ENCODE measurements at regions of chr6 and their contacts with region 1.

Region 1: DNA sequence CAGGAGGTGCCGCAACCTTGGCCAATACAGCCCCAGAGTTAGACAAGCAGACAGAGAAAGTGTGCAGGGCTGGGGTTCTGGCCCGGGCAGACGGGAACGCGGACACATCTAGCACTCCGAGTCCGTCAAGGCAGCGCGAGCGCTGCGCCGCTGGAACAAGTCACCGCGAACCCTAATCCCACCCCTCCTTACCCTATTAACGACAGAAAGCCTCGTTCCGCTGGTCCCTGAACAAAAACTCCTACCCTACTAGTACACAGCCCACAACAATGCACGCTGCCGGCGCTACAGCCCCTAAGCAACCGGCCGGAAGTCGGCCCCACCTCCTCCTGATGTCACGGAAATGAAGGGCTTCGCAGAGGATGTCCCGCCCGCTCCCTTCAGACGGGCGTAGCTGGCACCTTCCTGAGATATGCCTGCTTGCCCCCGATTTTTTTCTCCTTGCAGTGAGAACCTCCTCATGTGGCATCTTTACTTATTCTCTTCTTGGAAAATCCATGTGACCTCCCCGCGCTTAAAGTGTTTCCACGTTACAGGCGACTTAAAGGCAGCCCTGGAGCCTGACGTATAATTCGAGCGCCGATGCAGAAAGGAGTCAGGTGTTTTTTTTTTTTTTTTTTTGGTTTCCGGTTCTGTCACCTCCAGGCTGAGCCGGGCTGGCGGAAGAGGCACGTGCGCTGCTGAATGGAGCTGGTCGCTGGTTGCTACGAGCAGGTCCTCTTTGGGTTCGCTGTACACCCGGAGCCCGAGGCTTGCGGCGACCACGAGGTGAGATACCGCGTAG is at the starts of genes C6orf52 and PAK1IP1:
- DNase-seq: peak; percentile 85 to 97 (median 90)
- ATAC-seq: peak; percentile 92
- H3K4me3 ChIP-seq: peak within 1 kb of the TSS; percentile 95
- H3K4me3 Mint-ChIP-seq: peak within 1 kb of the TSS; percentile 92
- H3K27ac ChIP-seq: peak within 1 kb of the TSS; percentile 97 to 99
- H3K27ac Mint-ChIP-seq: peak within 1 kb of the TSS; percentile 100
- H3K4me1 ChIP-seq: peaks cover 25% of the 10 kb centered on the region
- H3K4me1 Mint-ChIP-seq: peaks cover 41% of the 10 kb centered on the region
- H3K27me3 ChIP-seq: no peaks in the 10 kb centered on the region
- H3K27me3 Mint-ChIP-seq: no peaks in the 10 kb centered on the region
- CTCF ChIP-seq: no peak
- total RNA-seq, gene C6orf52: not detected
- total RNA-seq, gene PAK1IP1: 4.1 to 5.8 TPM

Region 2: DNA sequence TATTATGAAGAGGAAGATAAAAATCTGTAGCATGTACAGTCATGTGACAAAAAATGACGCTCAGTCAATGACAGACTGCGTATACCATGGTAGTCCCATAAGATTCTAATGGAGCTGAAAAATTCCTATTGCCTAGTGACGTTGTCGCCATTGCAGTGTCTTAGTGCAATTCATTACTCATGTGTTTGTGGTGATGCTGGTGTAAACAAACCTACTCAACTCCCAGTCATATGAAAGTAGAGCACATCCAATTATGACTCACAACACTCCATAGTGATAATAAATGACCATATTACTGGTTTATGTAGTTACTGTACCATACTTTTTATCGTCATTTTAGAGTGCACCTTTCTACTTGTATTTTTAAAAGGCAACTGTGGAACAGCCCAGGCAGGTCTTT is 324.6 kb before region 1 on chr6:
- CTCF ChIA-PET with region 1: no interaction called
- POLR2A ChIA-PET with region 1: no interaction called
- intact Hi-C with region 1: no loop called
- DNase-seq: no peak
- ATAC-seq: no peak
- H3K4me3 ChIP-seq: no peak overlapping the region
- H3K4me3 Mint-ChIP-seq: no peak overlapping the region
- H3K27ac ChIP-seq: no peak overlapping the region
- H3K27ac Mint-ChIP-seq: no peak overlapping the region
- H3K4me1 ChIP-seq: no peaks in the 10 kb centered on the region
- H3K4me1 Mint-ChIP-seq: no peaks in the 10 kb centered on the region
- H3K27me3 ChIP-seq: no peaks in the 10 kb centered on the region
- H3K27me3 Mint-ChIP-seq: peaks cover 43% of the 10 kb centered on the region
- CTCF ChIP-seq: no peak

Region 3: DNA sequence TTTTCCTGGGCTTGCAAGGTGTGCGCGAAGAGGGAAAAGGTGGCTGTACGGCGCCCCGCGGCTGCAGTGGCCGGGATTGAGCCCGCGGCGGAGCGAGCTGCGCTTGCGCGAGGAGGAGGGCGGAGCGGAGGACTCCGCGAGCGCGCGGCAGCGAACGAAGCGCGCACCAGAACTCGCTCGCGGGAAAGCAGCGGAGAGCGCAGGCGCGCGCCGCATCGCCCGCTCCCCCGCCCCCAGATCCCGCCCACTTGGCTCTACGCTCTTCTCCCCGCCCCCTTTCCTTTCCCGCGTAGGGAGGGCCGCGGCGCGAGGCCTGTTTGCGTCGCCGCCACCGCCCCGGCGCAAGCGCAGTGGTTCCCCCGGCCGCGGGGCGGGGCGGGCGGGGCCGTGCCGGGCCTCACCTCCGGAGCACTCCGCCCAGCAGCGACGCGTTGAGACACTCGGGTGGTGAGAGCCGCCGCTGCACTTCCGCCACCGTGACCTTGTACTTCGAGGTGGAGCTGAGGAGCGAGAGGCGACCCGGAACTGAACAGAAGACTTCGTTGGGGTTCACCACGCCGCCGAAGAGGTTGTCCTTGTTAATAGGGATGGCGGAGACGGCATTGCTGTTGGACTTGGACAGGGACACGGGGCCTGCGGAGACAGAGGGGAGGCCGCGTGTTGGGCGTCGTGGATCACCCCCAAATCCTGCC is 290.2 kb before region 1 on chr6:
- CTCF ChIA-PET with region 1: no interaction called
- POLR2A ChIA-PET with region 1: no interaction called
- intact Hi-C with region 1: loop called in 1 of 2 experiments (anchors 5 kb)
- DNase-seq: peak; percentile 59 to 93 (median 74)
- ATAC-seq: peak; percentile 86
- H3K4me3 ChIP-seq: peak overlapping the region; percentile 63
- H3K4me3 Mint-ChIP-seq: peak overlapping the region; percentile 89
- H3K27ac ChIP-seq: peak overlapping the region in 1 of 2 donors; percentile 54
- H3K27ac Mint-ChIP-seq: peak overlapping the region; percentile 59
- H3K4me1 ChIP-seq: peaks cover 16% of the 10 kb centered on the region
- H3K4me1 Mint-ChIP-seq: peaks cover 10% of the 10 kb centered on the region
- H3K27me3 ChIP-seq: peaks cover 36 to 38% of the 10 kb centered on the region in 2 experiments
- H3K27me3 Mint-ChIP-seq: peaks cover 65% of the 10 kb centered on the region
- CTCF ChIP-seq: no peak

Region 4: GRCh38 chr6:10682355-10682988 is 12.0 kb before region 1 on chr6:
- CTCF ChIA-PET with region 1: no interaction called
- POLR2A ChIA-PET with region 1: interaction called, 14 read pairs
- intact Hi-C with region 1: no loop called
- DNase-seq: no peak
- ATAC-seq: no peak
- H3K4me3 ChIP-seq: no peak overlapping the region
- H3K4me3 Mint-ChIP-seq: no peak overlapping the region
- H3K27ac ChIP-seq: no peak overlapping the region
- H3K27ac Mint-ChIP-seq: peak overlapping the region; percentile 70
- H3K4me1 ChIP-seq: no peaks in the 10 kb centered on the region
- H3K4me1 Mint-ChIP-seq: peaks cover 20% of the 10 kb centered on the region
- H3K27me3 ChIP-seq: no peaks in the 10 kb centered on the region
- H3K27me3 Mint-ChIP-seq: peaks cover 12% of the 10 kb centered on the region
- CTCF ChIP-seq: no peak

Region 5: DNA sequence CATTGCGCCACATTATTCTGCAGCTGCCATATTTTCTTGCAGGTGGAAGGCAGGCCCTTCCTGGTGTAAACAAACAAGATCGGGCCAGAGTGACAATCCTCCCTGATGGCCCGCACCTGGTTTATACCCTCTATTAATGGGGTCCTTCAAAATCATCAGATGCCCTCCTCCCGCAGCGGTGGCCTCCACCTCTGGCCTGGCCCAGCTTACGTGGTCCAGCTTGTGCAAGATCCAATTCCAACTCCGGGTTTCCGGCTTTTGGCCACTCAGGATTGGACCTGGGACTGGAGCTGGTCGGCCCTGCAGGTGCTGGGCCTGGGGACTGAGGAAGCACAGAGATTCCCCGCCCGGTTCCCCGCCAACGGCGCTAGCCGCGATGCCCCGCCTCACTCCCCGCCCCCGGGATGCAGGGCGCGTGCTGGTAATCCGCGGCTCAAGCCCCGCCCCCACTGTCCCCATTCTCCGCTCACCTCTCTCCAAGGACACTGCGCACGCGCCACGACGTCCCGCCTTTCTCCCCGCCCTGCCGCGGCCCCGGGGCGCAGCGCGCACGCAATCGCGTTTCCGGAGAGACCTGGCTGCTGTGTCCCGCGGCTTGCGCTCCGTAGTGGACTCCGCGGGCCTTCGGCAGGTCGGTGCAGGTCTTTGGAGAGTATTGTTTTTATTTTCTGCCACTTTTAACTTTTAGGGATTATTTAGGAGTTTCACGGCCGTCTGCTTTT is 52.9 kb after region 1 on chr6 and contains the start of gene TMEM14B:
- CTCF ChIA-PET with region 1: interaction called, 3 read pairs
- POLR2A ChIA-PET with region 1: interaction called, 40 read pairs
- intact Hi-C with region 1: loop called (anchors 1 kb)
- DNase-seq: peak; percentile 99 to 100 (median 100)
- ATAC-seq: peak; percentile 97
- H3K4me3 ChIP-seq: peak within 1 kb of the TSS; percentile 95
- H3K4me3 Mint-ChIP-seq: peak within 1 kb of the TSS; percentile 86
- H3K27ac ChIP-seq: peak within 1 kb of the TSS; percentile 60 to 75
- H3K27ac Mint-ChIP-seq: peak within 1 kb of the TSS; percentile 97
- H3K4me1 ChIP-seq: peaks cover 35% of the 10 kb centered on the region
- H3K4me1 Mint-ChIP-seq: peaks cover 69% of the 10 kb centered on the region
- H3K27me3 ChIP-seq: no peaks in the 10 kb centered on the region
- H3K27me3 Mint-ChIP-seq: no peaks in the 10 kb centered on the region
- CTCF ChIP-seq: no peak
- total RNA-seq, gene TMEM14B: 41.8 to 44.1 TPM

Region 6: DNA sequence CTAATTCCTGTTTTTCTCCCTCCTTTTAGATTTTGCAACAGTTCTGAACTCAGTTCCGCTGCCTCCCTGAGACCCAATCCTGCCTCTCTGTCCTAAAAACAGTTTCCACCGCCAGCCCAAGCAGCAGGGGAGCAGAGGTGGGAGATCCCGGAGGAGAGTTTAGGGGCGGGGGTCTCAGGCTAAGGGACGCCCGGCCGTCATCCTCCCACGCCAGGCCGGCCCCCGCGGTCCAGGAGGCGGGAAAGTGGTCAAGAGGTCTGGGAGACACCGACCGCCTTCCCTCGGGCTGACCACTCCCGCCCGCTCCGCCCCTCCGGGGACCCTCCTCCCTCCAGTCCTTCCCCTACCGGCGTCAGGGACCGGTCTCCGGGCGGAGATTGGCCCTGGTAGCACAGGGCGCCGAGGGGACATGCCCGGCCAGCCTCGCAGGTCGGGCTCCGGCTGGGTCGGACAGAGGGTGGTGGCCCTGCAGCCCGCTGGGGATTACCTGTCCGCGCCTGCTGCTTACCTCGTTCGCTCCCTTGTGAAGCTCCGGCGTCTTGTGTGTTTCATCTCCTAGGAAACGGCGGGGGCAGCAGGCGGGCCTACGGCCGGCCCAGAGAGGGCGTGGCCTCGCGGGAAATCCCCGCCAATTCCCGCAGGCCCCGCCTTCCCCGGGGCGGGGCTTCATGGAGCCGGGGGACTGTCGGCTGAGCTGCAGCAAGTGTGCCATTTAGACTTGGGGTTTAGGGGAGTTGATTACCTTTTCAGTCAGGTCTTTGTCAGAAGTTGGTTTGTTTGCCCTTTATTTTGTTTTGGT is 143.7 kb after region 1 on chr6 and contains the start of gene MAK:
- CTCF ChIA-PET with region 1: no interaction called
- POLR2A ChIA-PET with region 1: interaction called, 4 read pairs
- intact Hi-C with region 1: loop called in 1 of 2 experiments (anchors 2 kb)
- DNase-seq: peak; percentile 68 to 95 (median 82)
- ATAC-seq: peak; percentile 97
- H3K4me3 ChIP-seq: peak within 1 kb of the TSS; percentile 62
- H3K4me3 Mint-ChIP-seq: peak within 1 kb of the TSS; percentile 79
- H3K27ac ChIP-seq: no peak within 1 kb of the TSS
- H3K27ac Mint-ChIP-seq: peak within 1 kb of the TSS; percentile 60
- H3K4me1 ChIP-seq: peaks cover 21% of the 10 kb centered on the region
- H3K4me1 Mint-ChIP-seq: peaks cover 21% of the 10 kb centered on the region
- H3K27me3 ChIP-seq: peaks cover 31 to 48% of the 10 kb centered on the region in 2 experiments
- H3K27me3 Mint-ChIP-seq: peaks cover 66% of the 10 kb centered on the region
- CTCF ChIP-seq: no peak
- total RNA-seq, gene MAK: 0.47 to 0.73 TPM

Region 7: DNA sequence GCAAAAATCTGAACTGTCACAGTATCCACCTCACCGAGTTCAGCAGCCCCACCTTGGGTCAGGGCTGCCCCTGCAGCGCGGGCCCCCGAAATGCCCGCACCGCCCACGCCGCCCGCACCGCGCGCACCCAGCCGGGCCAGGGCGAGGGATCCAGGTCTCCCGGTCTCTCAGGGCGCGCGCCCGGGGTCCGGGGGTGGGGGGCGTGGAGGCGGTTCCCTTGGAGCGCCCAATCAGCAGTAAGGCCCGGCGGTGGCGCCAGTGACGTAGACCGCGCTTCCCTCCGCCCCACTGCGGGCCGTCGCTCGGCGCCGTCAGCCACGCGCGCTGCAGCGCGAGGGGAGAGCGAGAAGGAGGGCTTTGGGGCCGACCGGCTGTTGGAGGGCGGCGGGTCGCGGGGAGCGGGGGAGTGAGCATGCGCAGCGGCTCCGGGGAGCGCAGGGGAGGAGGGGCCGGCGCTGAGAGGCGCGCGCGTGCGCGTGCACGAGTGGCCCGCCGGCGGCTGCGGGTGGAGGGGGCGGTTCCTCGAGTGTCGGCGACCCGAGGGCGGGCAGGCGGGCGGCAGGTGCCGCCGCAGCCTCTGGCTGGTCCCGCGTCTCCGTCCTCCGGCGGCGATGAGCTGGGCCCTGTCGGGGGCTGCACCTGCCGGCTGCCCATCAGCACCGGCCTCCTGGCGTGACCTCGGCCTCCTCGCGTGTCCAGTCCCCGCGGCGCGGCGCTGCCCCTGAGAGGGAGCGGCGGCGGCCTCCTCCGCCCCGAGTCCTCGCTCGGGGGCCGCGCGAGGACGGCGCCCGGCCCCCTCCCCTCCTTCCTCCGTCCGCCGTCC is 842.9 kb after region 1 on chr6 and contains the start of gene TMEM170B:
- CTCF ChIA-PET with region 1: no interaction called
- POLR2A ChIA-PET with region 1: interaction called, 3 read pairs
- intact Hi-C with region 1: loop called (anchors 10 kb)
- DNase-seq: peak; percentile 94 to 99 (median 97)
- ATAC-seq: peak; percentile 92
- H3K4me3 ChIP-seq: peak within 1 kb of the TSS; percentile 73
- H3K4me3 Mint-ChIP-seq: peak within 1 kb of the TSS; percentile 93
- H3K27ac ChIP-seq: peak within 1 kb of the TSS in 1 of 2 donors; percentile 47
- H3K27ac Mint-ChIP-seq: peak within 1 kb of the TSS; percentile 84
- H3K4me1 ChIP-seq: peaks cover 14% of the 10 kb centered on the region
- H3K4me1 Mint-ChIP-seq: peaks cover 28% of the 10 kb centered on the region
- H3K27me3 ChIP-seq: no peaks in the 10 kb centered on the region
- H3K27me3 Mint-ChIP-seq: peaks cover 6% of the 10 kb centered on the region
- CTCF ChIP-seq: no peak
- total RNA-seq, gene TMEM170B: 1.9 to 2.1 TPM